Activated CD4-positive, alpha-beta T cell treated with anti-CD3 and anti-CD28 coated beads for 36 hours (primary cell): ENCODE measurements at regions of chr12 and their contacts with region 1.

Region 1: GRCh38 chr12:91326058-91327027 is 143.7 kb upstream of the DCN start:
- DNase-seq: peak; percentile 36
- ATAC-seq: peak; percentile 36
- H3K4me3 Mint-ChIP-seq: no peak overlapping the region
- H3K27ac Mint-ChIP-seq: no peak overlapping the region
- H3K4me1 Mint-ChIP-seq: no peaks in the 10 kb centered on the region
- H3K27me3 Mint-ChIP-seq: no peaks in the 10 kb centered on the region

Region 2: GRCh38 chr12:90940872-90941499 is 385.4 kb before region 1 on chr12:
- CTCF ChIA-PET with region 1: interaction called, 7 read pairs
- POLR2A ChIA-PET with region 1: no interaction called
- intact Hi-C with region 1: loop called in 1 of 2 experiments (anchors 5 kb)
- DNase-seq: no peak
- ATAC-seq: no peak
- H3K4me3 Mint-ChIP-seq: no peak overlapping the region
- H3K27ac Mint-ChIP-seq: no peak overlapping the region
- H3K4me1 Mint-ChIP-seq: no peaks in the 10 kb centered on the region
- H3K27me3 Mint-ChIP-seq: peaks cover 4% of the 10 kb centered on the region

Region 3: DNA sequence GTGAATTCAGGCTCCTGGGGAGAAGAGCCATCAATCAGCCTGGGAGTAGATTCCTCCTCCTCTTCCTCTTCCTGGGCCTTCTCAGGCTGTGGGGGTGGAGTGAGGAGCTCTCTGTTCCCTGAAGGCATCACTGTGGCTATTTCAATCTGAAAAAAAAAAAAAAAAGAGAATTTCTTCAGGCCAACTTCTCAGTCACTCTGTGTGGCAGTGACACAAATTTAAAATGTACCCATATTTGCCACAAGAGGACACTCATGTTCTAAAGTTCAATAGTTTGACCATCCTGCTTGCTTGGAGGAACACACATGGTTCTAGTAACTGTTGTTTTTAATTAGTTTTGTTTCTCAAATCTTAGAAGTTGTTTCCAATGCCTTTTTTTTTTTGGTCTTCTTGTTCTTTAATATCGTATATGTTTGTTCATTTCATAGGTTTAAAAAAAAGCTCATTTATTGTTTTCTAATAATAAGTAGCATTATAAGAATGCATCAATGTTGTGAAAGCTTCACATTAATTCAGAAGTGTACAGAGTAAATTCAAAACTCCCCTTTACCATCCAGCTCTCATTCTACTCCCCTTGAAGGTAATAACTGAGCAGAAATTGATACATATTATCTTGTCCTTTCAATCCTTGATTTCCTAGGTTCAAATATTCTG is 348.1 kb before region 1 on chr12:
- CTCF ChIA-PET with region 1: interaction called, 9 read pairs
- POLR2A ChIA-PET with region 1: no interaction called
- intact Hi-C with region 1: loop called (anchors 1 kb)
- DNase-seq: no peak
- ATAC-seq: no peak
- H3K4me3 Mint-ChIP-seq: no peak overlapping the region
- H3K27ac Mint-ChIP-seq: no peak overlapping the region
- H3K4me1 Mint-ChIP-seq: no peaks in the 10 kb centered on the region
- H3K27me3 Mint-ChIP-seq: peaks cover 5% of the 10 kb centered on the region

Region 4: DNA sequence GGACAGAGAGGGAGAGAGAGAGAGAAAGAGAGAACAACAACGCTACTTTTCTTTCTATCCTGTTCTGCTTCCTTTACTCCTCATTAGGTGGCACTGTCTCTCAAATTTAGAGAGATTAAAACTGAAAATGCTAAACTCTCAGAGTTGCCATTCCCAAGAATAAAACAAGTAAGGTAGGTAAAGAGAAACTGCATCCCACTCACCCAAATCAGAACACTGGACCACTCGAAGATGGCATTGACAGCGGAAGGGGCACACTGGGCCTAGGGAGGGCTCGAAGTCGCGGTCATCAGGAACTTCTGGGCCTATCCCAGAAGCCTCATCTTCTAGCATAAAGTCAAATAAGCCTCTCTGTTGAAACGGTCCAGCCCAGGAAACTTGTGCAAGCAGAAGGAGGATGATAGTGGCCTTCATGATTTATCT is 148.2 kb before region 1 on chr12:
- CTCF ChIA-PET with region 1: interaction called, 10 read pairs
- POLR2A ChIA-PET with region 1: no interaction called
- intact Hi-C with region 1: loop called (anchors 2 to 5 kb)
- DNase-seq: no peak
- ATAC-seq: no peak
- H3K4me3 Mint-ChIP-seq: no peak overlapping the region
- H3K27ac Mint-ChIP-seq: no peak overlapping the region
- H3K4me1 Mint-ChIP-seq: no peaks in the 10 kb centered on the region
- H3K27me3 Mint-ChIP-seq: no peaks in the 10 kb centered on the region

Region 5: GRCh38 chr12:91577586-91578539 is 251.5 kb after region 1 on chr12:
- CTCF ChIA-PET with region 1: no interaction called
- POLR2A ChIA-PET with region 1: no interaction called
- intact Hi-C with region 1: no loop called
- DNase-seq: no peak
- ATAC-seq: peak; percentile 47
- H3K4me3 Mint-ChIP-seq: peak overlapping the region; percentile 35
- H3K27ac Mint-ChIP-seq: peak overlapping the region; percentile 32
- H3K4me1 Mint-ChIP-seq: peaks cover 8% of the 10 kb centered on the region
- H3K27me3 Mint-ChIP-seq: no peaks in the 10 kb centered on the region